A549 (cell line): ENCODE measurements at regions of chr2 and their contacts with region 1.

Region 1: GRCh38 chr2:85826990-85827878 is 61.6 kb downstream of the ST3GAL5 start:
- DNase-seq: peak; percentile 72 to 88
- ATAC-seq: peak; percentile 95 to 99
- H3K4me3 ChIP-seq: peak overlapping the region; percentile 21; the same call in 1 of the 3 replicates
- H3K27ac ChIP-seq: peak overlapping the region; percentile 74 to 84
- H3K4me1 ChIP-seq: peaks cover 8% of the 10 kb centered on the region
- CTCF ChIP-seq: peak; percentile 96
- EP300 ChIP-seq: no peak
- POLR2A ChIP-seq: no peak
- RAD21 ChIP-seq: peak; percentile 99

Region 2: DNA sequence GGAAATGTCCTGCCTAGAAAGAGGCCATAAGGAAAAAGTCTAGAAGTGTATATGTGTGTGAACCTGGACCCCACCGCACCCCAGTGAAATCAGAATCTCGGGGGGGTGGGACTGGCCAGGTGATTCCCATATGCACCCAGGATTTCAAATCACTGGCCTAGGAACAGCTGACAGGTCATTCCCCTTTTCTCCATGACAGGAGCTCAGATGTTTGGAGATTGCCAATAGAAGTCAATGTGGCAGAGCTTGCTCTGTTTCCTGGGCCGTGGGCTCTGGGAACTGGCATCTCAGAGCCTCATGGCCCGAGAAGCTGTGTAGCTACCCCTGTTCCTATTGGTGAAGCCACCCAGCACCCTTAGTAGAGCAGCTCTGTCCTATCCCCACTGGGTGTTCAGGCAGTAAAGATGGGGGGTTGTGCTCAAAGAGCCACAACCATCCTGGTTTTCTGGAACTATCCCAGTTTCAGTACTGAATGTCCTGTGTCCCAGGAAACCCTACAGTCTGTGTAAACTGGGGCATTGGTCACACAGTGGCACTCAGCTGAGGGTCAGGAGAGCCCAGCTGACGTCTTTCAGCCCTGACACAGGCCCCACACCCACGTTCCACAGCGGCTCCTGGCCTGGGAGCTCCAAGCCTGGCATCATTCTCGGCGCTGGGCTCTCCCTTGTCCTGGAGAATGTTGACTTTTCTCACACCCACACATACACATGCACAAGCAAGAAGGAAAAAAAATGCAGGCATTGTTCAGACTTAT is 114.2 kb before region 1 on chr2:
- CTCF ChIA-PET with region 1: interaction called, 21 read pairs
- POLR2A ChIA-PET with region 1: no interaction called
- DNase-seq: peak in 1 of 2 experiments; percentile 54
- ATAC-seq: peak; percentile 35 to 43; a peak in 3 of 6 replicates
- H3K4me3 ChIP-seq: no peak overlapping the region
- H3K27ac ChIP-seq: peak overlapping the region; percentile 11 to 68; a peak in 2 of 6 replicates
- H3K4me1 ChIP-seq: peaks cover 16% of the 10 kb centered on the region; the same call in 2 of the 3 replicates
- CTCF ChIP-seq: no peak
- EP300 ChIP-seq: no peak
- POLR2A ChIP-seq: no peak
- RAD21 ChIP-seq: no peak

Region 3: DNA sequence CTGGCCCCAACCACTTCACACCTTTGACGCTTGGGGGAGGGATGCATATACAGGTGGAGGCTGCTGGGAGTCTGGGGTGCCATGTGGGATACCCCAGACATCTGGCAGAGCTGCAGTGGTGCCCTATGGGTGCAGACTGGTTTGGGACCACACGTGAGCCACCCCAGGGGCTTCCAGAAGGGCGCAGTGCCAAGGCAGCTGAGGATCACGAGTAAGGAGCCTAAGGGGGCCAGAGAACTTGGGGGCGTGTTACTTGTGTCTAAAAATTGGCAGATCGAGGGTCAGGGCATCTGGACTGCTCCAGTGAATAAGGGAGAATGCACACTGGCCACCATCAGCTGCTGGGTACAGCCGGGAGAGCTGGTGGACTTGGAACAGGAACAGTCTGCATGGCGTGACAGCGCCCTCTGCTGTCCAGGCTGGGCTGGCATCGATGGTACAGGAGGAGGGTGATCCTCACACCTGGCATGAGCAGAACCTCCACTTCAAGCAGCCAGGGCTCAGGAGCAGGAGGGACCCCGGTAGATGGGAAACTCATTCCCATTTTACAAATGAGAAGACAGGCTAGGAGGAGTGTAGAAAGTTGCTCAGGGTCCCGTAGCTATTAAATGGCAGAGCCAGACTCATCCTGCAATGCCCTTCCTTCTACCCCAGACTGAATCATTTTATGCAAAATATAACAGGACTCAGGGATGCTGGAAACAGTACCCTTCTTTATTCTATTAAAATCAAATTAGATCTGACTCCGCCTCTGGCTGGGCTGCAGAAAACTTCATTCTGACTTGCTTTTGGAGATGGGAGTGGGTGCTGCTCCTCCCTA is 13.0 kb before region 1 on chr2:
- CTCF ChIA-PET with region 1: interaction called, 129 read pairs
- POLR2A ChIA-PET with region 1: no interaction called
- DNase-seq: peak; percentile 91 to 93
- ATAC-seq: peak; percentile 97 to 99
- H3K4me3 ChIP-seq: no peak overlapping the region
- H3K27ac ChIP-seq: peak overlapping the region; percentile 52 to 71
- H3K4me1 ChIP-seq: peaks cover 24% of the 10 kb centered on the region
- CTCF ChIP-seq: peak; percentile 98
- EP300 ChIP-seq: no peak
- POLR2A ChIP-seq: no peak
- RAD21 ChIP-seq: peak; percentile 100

Region 4: DNA sequence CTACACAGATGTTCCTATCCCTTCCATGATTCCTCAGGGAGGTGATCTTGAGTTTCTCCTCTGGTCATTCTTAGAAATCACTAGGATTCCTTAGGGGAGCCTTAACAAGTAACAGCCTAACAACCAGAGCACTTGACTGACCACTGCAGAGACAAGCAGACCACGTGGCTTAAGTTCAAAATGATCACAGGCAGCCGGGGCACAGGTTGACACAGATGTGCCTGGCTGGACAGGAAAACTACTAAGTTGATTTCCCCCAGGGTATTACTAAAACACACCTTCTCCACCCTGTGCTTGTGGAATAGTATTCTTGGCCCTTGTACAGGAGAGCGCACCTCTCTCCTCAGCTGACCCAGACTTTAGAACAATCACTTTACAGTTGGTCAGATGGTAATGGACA is 31.6 kb after region 1 on chr2:
- CTCF ChIA-PET with region 1: interaction called, 24 read pairs
- POLR2A ChIA-PET with region 1: no interaction called
- DNase-seq: no peak
- ATAC-seq: no peak; a peak in 1 of 6 replicates
- H3K4me3 ChIP-seq: no peak overlapping the region
- H3K27ac ChIP-seq: no peak overlapping the region
- H3K4me1 ChIP-seq: no peaks in the 10 kb centered on the region
- CTCF ChIP-seq: no peak
- EP300 ChIP-seq: no peak
- POLR2A ChIP-seq: no peak
- RAD21 ChIP-seq: no peak

Region 5: DNA sequence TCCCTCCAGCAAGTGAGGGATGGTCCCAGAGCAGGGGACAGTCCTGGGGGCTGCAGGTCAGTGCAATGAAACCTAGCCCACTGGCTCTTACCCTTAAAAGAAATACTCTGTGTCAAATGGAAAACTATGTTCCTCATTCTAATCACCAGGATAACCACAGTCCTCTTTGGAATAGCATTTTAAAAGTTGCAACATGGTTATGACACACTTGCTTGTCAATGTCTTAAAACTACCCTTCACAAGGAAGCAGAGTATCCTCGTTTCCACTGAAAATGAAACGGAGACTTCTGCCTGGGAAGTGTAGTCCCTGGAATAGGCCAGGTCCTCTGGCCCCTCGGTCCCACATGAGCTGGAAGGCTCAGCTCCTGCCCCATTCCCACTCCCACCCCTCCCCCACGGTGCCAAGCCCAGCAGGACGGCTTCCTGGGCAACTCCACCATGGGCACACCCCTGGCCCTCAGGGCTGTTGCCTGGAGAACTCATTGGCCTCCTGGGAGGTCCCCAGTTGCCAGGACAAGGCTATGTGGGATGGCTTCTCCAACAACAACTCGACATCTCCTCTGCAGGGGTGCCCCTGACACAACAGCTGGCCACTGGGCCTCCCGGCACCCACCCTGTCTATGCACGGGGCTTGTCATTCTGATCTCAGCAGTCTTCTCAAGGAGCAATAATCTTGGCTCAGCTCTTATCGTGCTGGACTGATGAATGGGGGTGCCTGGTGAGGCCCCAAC is 99.9 kb after region 1 on chr2:
- CTCF ChIA-PET with region 1: interaction called, 15 read pairs
- POLR2A ChIA-PET with region 1: no interaction called
- DNase-seq: no peak
- ATAC-seq: peak; percentile 15 to 17; a peak in 3 of 6 replicates
- H3K4me3 ChIP-seq: no peak overlapping the region
- H3K27ac ChIP-seq: peak overlapping the region; percentile 69 to 82
- H3K4me1 ChIP-seq: peaks cover 73% of the 10 kb centered on the region
- CTCF ChIP-seq: no peak
- EP300 ChIP-seq: no peak
- POLR2A ChIP-seq: no peak
- RAD21 ChIP-seq: no peak; a peak in 1 of 5 replicates

Region 6: DNA sequence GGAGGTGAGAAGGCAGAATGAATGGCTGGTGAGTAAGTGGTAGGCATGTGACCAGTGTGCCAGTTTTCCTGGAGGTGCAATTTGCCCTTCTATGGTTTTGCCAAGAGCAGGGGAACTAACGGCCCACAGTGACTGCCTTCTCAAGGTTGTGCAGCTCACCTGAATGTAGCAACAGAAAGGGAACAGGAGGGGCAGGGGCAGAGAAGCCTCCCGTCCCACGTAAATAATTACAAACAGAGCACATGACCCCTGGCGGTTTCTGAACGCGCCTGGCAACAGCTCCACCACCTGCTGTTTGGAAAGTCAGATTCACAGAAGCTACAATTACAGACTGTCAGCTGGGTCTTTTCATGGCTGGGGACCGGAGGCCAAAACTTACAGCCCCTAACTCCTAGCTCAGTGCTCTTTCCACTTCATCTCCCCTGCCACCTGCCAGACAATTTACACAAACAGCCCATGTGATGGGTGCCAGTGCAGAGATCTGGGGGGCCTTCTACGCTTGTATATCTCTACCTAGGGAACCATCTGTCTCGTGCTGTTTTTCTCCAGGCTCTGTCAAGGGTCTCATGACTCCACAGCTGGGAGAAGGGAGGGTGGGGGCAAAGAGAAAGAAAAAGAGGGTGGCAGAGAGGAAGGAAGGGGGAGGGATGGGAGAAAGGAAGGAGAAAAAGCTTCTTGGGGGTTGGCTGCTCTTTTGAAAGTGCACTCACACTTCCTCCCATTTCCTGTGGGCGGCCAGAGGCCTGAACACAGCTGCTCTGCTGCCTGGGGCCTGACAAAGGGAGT is 208.8 kb after region 1 on chr2:
- CTCF ChIA-PET with region 1: interaction called, 39 read pairs
- POLR2A ChIA-PET with region 1: no interaction called
- DNase-seq: no peak
- ATAC-seq: peak; percentile 58 to 66; a peak in 4 of 6 replicates
- H3K4me3 ChIP-seq: no peak overlapping the region
- H3K27ac ChIP-seq: peak overlapping the region; percentile 28 to 64; a peak in 4 of 6 replicates
- H3K4me1 ChIP-seq: peaks cover 15% of the 10 kb centered on the region; the same call in 2 of the 3 replicates
- CTCF ChIP-seq: no peak
- EP300 ChIP-seq: no peak
- POLR2A ChIP-seq: no peak
- RAD21 ChIP-seq: peak in 1 of 2 experiments; percentile 15; a peak in 2 of 5 replicates